BJ (cell line): ENCODE measurements at regions of chr19 and their contacts with region 1.

Region 1: GRCh38 chr19:39341719-39342604 is at the start of gene SAMD4B:
- DNase-seq: peak; percentile 71
- H3K4me3 ChIP-seq: peak within 1 kb of the TSS; percentile 94
- H3K27me3 ChIP-seq: no peaks in the 10 kb centered on the region
- CTCF ChIP-seq: peak; percentile 69
- polyA plus RNA-seq, gene SAMD4B: 45.7 and 75.7 TPM in 2 replicates

Region 2: DNA sequence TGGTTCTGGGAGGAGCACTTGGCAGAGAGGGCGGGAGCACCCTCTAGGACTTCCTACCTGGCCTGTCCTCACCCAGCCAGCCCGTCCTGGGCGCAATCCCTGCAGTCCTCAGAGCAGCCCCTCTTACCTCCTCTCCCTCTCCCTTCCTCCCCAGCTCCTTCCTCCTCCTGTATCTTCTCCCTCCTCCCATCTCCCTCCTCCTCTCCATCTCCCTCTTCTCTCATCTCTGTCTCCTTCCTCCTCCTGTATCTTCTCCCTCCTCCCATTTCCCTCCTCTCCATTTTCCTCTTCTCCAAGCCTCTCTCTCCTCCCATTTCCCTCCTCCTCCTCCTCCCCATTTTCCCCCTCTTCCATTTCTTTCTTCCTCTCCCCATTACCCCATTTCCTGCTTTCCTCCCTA is 818.6 kb before region 1 on chr19:
- CTCF ChIA-PET with region 1: no interaction called
- POLR2A ChIA-PET with region 1: interaction called, 11 read pairs
- DNase-seq: no peak
- H3K4me3 ChIP-seq: no peak overlapping the region
- H3K27me3 ChIP-seq: no peaks in the 10 kb centered on the region
- CTCF ChIP-seq: no peak

Region 3: DNA sequence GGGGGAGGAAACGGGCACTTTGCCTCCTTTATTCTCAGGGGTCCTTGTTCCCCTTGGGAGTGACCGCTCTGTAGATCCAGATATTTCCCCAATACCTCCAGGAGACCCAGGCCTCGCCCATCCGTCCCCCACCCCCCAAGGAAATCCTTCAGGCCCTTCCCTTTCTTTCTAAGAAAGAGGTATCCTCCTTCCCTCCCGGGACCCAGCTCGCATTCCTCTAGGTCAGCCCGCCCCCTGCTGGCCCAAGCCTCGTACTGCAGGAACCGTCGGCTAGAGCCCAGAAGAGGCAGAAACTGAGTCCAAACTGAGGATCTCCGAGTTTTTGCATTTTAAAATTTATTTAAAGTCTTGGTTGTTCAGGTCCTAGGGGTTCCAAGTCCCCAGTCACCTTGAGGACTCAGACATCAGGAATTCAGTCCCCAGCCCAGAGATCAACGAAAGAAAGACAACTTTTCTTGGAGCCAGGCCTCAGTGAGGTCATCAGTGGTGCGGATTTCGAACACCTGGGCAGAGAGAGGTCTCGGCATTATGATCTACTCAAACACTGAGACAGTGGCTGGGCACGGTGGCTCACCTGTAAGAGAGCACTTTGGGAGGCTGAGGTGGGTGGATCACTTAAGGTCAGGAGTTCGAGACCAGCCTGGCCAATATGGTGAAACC is 13.8 kb before region 1 on chr19:
- CTCF ChIA-PET with region 1: interaction called, 11 read pairs
- POLR2A ChIA-PET with region 1: interaction called, 3 read pairs
- DNase-seq: no peak
- H3K4me3 ChIP-seq: no peak overlapping the region
- H3K27me3 ChIP-seq: peaks cover 1% of the 10 kb centered on the region
- CTCF ChIP-seq: peak; percentile 98